ENCODE measurements at regions of chr6 and their contacts with region 1.

Region 1: DNA sequence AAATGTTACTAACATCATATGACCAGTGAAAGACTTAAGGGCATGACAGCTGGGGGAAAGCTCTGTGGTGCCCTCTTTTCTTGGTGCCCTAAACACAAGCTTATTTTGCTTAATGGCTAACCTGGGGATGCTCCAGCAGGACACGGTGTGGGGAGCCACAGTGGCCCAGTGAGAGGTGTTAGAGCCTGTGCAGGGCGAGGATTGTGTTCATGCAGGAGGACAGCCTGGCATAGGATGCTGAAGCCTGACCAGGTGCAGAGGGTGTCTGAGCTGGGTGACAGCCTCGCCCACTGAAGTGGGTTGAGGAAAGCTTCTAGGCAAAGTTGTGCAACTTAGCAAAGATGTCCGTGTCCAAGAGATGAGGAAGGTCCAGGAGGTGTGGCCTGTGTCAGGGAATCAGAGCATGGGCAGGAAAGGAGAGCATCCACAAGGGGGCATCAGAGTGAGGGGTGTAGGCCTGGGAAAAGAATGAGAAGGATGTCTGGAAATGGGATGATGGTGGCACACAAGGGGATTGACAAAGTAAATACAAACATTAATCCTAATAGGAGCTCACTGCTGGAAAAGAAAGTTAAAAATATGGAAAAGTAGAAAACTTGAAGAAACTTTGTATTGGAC is 33.9 kb downstream of the SLC17A4 start:
- H3K4me3 Mint-ChIP-seq: no peak overlapping the region
- H3K27ac Mint-ChIP-seq: no peak overlapping the region
- H3K4me1 Mint-ChIP-seq: no peaks in the 10 kb centered on the region
- H3K27me3 Mint-ChIP-seq: no peaks in the 10 kb centered on the region

Region 2: GRCh38 chr6:25942561-25943147 is 154.2 kb after region 1 on chr6:
- intact Hi-C with region 1: loop called (anchors 2 kb)
- H3K4me3 Mint-ChIP-seq: no peak overlapping the region
- H3K27ac Mint-ChIP-seq: no peak overlapping the region
- H3K4me1 Mint-ChIP-seq: no peaks in the 10 kb centered on the region
- H3K27me3 Mint-ChIP-seq: peaks cover 4% of the 10 kb centered on the region

Region 3: GRCh38 chr6:26003102-26003694 is 214.8 kb after region 1 on chr6:
- intact Hi-C with region 1: loop called (anchors 1 kb)
- H3K4me3 Mint-ChIP-seq: no peak overlapping the region
- H3K27ac Mint-ChIP-seq: no peak overlapping the region
- H3K4me1 Mint-ChIP-seq: peaks cover 37% of the 10 kb centered on the region
- H3K27me3 Mint-ChIP-seq: no peaks in the 10 kb centered on the region